ENCODE measurements at regions of chr5 and their contacts with region 1.

Region 1: GRCh38 chr5:148912714-148913398 is 86.4 kb downstream of the ADRB2 start:
- DNase-seq: peak; percentile 87 to 95
- H3K4me3 ChIP-seq: no peak overlapping the region
- H3K27ac ChIP-seq: peak overlapping the region; percentile 98
- H3K4me1 ChIP-seq: peaks cover 89% of the 10 kb centered on the region
- H3K27me3 ChIP-seq: no peaks in the 10 kb centered on the region
- CTCF ChIP-seq: peak; percentile 69

Region 2: GRCh38 chr5:148730943-148731861 is 181.7 kb before region 1 on chr5:
- CTCF ChIA-PET with region 1: no interaction called
- POLR2A ChIA-PET with region 1: interaction called, 5 read pairs
- intact Hi-C with region 1: loop called (anchors 1 kb)
- DNase-seq: peak; percentile 65 to 69
- H3K4me3 ChIP-seq: no peak overlapping the region
- H3K27ac ChIP-seq: no peak overlapping the region
- H3K4me1 ChIP-seq: peaks cover 27% of the 10 kb centered on the region
- H3K27me3 ChIP-seq: no peaks in the 10 kb centered on the region
- CTCF ChIP-seq: peak; percentile 95

Region 3: DNA sequence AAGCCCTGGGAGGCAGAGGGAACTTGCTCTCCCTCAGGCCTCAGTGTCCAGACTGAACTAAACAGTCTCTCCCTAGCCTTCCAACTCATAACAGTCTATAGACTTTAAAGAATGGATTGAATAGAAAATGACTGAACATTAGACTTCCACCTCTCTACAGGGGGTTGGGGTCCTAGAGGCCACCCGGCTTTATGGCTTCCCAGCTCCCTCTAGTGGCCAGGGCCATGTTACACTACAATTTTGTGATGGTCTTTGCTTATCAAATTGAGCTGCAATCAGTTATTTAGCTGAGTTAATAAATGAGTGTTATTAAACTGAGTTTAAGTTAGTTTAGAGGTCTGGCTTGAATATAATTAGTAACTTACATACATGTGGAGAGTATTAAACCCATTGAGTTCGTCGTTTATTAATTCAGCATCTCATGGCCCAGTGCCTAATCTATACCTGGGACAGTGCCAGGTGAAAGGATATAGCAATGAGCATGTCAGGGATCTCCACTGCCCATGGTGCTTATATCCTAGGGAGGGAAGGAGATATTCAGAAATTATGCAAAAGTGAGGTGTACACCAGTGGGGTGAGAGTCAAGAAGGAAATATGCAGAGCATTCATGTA is 44.8 kb after region 1 on chr5:
- CTCF ChIA-PET with region 1: interaction called, 12 read pairs
- POLR2A ChIA-PET with region 1: interaction called, 6 read pairs
- intact Hi-C with region 1: loop called (anchors 1 kb)
- DNase-seq: peak; percentile 35 to 45
- H3K4me3 ChIP-seq: no peak overlapping the region
- H3K27ac ChIP-seq: no peak overlapping the region
- H3K4me1 ChIP-seq: peaks cover 35% of the 10 kb centered on the region
- H3K27me3 ChIP-seq: no peaks in the 10 kb centered on the region
- CTCF ChIP-seq: peak; percentile 97

Region 4: DNA sequence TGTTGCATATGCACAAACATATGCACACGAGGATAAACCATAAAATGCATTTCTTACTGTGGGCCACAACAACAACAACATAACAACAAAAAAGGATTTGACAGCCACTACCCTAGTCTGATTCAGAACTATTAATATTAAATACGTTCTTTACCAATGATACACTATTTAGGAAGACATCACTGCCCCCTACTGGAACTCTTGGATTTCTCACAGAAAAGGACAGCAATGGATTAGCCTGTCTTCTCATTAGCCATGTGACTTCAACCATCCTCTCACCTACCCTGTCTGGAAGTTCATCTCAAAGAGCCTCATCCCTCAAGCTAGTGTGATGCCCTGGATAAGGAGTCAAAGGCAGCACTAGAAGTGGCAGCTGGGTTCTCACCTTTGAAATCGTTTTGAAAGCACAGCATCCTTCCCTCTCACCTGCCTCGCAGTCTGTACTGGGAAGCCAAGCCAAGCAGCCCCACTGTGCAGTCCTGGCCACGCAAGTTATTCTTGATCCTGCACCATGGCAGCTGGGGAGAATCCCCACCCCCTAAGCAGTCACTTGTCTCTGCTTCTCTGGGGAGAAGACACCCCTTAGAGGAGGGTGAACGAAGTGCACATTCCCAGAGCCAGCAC is 85.4 kb after region 1 on chr5:
- CTCF ChIA-PET with region 1: interaction called, 3 read pairs
- POLR2A ChIA-PET with region 1: no interaction called
- intact Hi-C with region 1: loop called (anchors 1 kb)
- DNase-seq: peak; percentile 46 to 54
- H3K4me3 ChIP-seq: no peak overlapping the region
- H3K27ac ChIP-seq: no peak overlapping the region
- H3K4me1 ChIP-seq: peaks cover 46% of the 10 kb centered on the region
- H3K27me3 ChIP-seq: no peaks in the 10 kb centered on the region
- CTCF ChIP-seq: peak; percentile 85

Region 5: DNA sequence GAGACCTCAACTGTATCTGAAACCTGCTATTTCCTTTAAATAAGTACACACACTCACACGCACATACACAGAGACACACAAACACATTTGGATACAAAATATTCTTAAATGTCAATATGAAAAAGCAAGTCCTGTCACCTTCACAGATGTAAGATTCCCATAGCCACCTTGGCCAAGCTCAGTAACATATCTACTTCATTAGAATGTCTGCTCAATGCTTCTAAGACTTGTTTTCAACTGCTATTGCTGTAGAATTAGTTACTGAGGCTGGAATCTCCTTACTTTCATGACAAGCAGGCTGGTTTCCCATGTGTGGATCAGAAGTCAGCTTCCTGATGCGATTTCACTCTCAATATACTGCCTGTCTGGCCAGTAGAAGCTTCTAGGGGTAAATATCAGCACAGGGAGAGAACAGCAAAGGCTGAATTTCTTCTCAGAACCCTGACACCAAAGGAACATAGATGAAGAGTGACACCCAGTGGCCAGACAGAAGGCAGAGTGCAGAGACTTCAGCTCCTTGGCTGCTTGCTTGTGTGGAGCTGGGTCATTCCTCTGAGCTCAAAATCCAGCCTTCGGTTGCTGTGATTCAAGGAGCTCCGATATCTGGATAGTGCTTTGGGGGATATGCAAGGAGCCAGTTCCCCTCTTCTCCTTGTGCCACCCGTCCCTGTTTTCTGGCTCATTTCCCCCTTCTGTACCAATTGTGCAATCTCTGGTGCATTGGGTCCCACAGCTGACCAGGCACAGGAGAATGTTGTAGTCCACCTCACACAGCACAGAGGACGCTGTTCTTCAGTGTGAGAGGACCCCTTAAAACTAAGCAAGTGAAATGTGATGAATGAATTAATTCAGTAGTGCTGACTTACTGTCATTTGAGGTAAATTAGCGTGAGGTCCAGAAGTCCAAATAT is 201.8 kb after region 1 on chr5:
- CTCF ChIA-PET with region 1: interaction called, 6 read pairs
- POLR2A ChIA-PET with region 1: interaction called, 10 read pairs
- intact Hi-C with region 1: loop called (anchors 1 kb)
- DNase-seq: peak; percentile 74 to 82
- H3K4me3 ChIP-seq: peak overlapping the region; percentile 22; the same call in 1 of the 2 replicates
- H3K27ac ChIP-seq: peak overlapping the region; percentile 92
- H3K4me1 ChIP-seq: peaks cover 66% of the 10 kb centered on the region
- H3K27me3 ChIP-seq: no peaks in the 10 kb centered on the region
- CTCF ChIP-seq: peak; percentile 90

Region 6: GRCh38 chr5:149268928-149269557 is 356.2 kb after region 1 on chr5:
- CTCF ChIA-PET with region 1: no interaction called
- POLR2A ChIA-PET with region 1: no interaction called
- intact Hi-C with region 1: loop called (anchors 5 kb)
- DNase-seq: peak in 1 of 2 experiments; percentile 72
- H3K4me3 ChIP-seq: no peak overlapping the region
- H3K27ac ChIP-seq: no peak overlapping the region
- H3K4me1 ChIP-seq: peaks cover 13% of the 10 kb centered on the region
- H3K27me3 ChIP-seq: no peaks in the 10 kb centered on the region
- CTCF ChIP-seq: peak; percentile 91

Region 7: DNA sequence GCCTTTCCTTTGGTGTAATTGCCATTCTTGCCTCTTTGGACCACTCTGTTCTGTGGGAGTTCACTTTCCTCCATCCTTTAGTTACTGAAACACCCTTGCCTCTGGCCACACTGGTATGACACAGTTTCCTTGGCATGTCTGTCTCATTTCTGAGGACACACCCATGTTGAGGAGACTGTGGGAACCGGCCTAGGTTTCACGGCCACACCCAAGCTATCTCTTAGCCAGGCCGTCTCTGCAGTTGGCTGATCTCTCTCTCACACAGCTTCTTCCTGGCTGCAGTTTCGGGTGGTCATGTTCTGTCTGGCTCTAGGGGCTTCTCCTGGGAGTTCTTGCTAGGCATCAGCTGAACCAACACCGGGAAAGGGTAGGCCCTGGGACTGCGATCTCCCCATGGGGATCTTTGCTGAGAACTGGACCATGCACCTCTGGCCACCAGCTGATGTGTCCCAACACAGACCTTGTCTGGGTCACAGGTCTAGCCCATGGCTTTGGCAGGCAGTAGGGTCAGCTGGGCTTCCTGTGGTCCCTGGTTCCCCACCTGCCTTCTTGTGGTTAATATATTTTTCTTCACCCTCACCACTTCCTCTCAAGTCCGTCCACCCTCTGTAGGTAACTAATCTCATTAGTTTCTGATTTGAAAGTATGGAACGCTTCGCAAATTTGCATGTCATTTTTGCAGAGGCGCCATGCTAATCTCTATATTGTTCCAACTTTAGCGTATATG is 693.3 kb after region 1 on chr5:
- CTCF ChIA-PET with region 1: no interaction called
- POLR2A ChIA-PET with region 1: no interaction called
- intact Hi-C with region 1: loop called (anchors 1 kb)
- DNase-seq: peak; percentile 88 to 98
- H3K4me3 ChIP-seq: no peak overlapping the region; the same call in 1 of the 2 replicates
- H3K27ac ChIP-seq: peak overlapping the region; percentile 94
- H3K4me1 ChIP-seq: peaks cover 55% of the 10 kb centered on the region
- H3K27me3 ChIP-seq: no peaks in the 10 kb centered on the region
- CTCF ChIP-seq: no peak

Measured in PC-9 (cell line).